HAP-1 (cell line): ENCODE measurements at regions of chr16 and their contacts with region 1.

Region 1: GRCh38 chr16:11535471-11535870 is 51.2 kb downstream of the LITAF start:
- DNase-seq: no peak
- H3K4me3 ChIP-seq: no peak overlapping the region
- H3K4me1 ChIP-seq: no peaks in the 10 kb centered on the region
- H3K27me3 ChIP-seq: no peaks in the 10 kb centered on the region

Region 2: DNA sequence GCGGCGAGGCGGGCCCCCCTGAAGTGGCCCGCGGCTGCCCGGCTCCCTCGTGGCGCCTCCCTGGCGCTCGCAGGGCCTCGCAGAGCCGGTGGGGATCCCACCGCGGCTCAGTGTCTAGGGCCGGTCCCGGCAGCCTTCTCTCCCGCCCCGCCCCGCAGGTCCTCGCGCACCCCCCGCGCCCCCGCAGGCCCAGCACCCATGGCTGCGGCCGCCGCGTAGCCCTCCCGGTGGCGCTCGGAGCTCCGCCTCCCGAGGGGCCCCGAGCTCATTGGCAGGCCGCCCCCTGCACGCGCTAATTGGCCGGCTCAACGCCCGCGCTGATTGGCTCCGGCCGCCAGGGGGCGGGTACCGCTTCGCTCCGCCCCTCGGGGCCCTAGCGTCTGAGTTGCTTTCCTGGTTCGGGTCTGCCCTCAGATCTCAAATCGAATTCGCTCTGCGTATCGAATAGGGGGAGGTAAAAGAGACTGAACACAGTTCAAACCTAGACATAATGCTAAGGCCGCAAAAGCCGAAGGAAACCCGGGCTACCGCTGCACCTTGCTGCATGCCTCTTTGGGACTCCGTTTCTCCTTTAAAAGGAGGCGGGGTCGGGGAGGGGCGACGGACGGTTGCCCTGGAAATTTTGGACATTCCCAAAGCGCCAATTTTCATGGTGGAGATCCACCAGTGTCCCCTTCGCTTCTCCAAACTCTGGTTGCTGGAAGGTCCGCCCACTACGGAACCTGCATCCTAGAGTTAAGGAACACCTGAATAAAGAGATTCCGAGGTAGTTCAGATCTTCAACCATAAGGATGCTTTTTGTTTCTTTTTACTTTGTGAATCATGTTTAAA is 593.0 kb before region 1 on chr16 and contains the start of gene DEXI:
- in situ Hi-C with region 1: no loop called
- DNase-seq: peak; percentile 87 to 94
- H3K4me3 ChIP-seq: peak within 1 kb of the TSS; percentile 58
- H3K4me1 ChIP-seq: peaks cover 32% of the 10 kb centered on the region
- H3K27me3 ChIP-seq: no peaks in the 10 kb centered on the region

Region 3: DNA sequence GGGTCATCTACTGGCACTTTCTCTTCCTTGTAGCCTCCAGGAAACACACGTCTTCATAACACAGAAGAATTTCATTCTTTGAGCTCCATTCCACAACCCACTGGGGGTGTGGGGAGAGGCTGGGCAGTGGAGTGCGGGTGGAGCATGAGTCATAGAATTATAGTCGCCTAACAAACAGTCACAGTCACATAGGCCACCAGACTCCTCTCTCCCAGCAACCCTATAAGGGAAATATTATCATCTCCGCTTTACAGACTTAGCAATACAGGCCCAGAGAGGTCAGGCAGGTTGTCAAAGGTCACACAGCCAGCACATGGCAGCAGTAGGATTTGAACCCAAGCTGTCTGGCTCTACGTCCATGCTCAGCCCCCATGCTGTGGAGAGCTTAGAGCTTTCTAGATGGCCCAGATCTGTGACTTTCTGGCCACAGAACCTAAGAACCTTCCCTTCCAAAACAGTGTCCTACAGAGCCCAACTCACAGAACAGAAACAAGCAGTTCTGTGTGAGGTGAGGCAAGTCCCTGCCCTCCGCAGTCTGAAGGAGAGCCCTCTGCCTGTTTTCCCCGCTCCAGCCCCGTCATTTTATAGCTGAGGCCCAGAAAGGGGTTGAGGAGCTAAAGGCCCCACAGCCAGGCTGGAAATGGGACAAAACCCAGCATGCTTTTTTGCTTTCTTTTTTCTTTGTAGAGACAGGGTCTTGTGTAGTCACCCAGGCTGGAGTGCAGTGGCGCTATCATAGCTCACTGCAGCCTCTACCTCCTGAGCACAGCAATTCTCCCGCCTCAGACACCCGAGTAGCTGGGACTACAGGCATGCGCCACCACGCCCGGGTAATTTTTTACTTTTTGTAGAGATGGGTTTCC is 62.0 kb after region 1 on chr16:
- in situ Hi-C with region 1: loop called (anchors 10 kb)
- DNase-seq: no peak
- H3K4me3 ChIP-seq: no peak overlapping the region
- H3K4me1 ChIP-seq: peaks cover 2% of the 10 kb centered on the region; the same call in 1 of the 2 replicates
- H3K27me3 ChIP-seq: no peaks in the 10 kb centered on the region